HCT116 (cell line): ENCODE measurements at regions of chr10 and their contacts with region 1.

Region 1: GRCh38 chr10:11515596-11516430 is 95.6 kb downstream of the USP6NL start:
- DNase-seq: peak; percentile 54
- ATAC-seq: peak; percentile 91
- H3K4me3 ChIP-seq: no peak overlapping the region
- H3K27ac ChIP-seq: no peak overlapping the region
- H3K4me1 ChIP-seq: peaks cover 0 to 14% of the 10 kb centered on the region in 2 experiments; a peak in 1 of 4 replicates
- H3K27me3 ChIP-seq: no peaks in the 10 kb centered on the region
- CTCF ChIP-seq: peak; percentile 77 to 85 (median 81)
- POLR2A ChIP-seq: no peak
- RAD21 ChIP-seq: peak; percentile 92

Region 2: DNA sequence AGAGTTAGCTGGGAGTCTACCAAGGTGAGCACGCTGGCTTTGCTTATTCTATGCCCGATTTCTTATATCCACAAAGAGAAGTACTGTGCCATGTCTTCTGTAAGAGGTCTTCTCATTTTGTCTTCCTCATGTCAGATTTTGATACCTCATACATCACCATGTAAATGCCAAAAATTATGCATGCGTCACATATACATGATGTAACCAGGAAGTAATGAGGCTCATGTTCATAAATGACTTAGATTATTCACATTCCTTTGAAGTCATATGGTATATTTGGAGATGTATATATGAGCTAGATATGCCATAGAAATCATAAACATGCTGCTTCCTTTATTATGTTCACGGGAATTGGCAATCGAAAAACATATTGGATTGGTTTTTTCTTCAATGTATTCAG is 595.8 kb before region 1 on chr10:
- CTCF ChIA-PET with region 1: no interaction called
- POLR2A ChIA-PET with region 1: no interaction called
- RAD21 ChIA-PET with region 1: no interaction called
- intact Hi-C with region 1: no loop called
- DNase-seq: no peak
- ATAC-seq: no peak
- H3K4me3 ChIP-seq: no peak overlapping the region
- H3K27ac ChIP-seq: no peak overlapping the region
- H3K4me1 ChIP-seq: no peaks in the 10 kb centered on the region
- H3K27me3 ChIP-seq: no peaks in the 10 kb centered on the region
- CTCF ChIP-seq: no peak
- POLR2A ChIP-seq: no peak
- RAD21 ChIP-seq: no peak

Region 3: DNA sequence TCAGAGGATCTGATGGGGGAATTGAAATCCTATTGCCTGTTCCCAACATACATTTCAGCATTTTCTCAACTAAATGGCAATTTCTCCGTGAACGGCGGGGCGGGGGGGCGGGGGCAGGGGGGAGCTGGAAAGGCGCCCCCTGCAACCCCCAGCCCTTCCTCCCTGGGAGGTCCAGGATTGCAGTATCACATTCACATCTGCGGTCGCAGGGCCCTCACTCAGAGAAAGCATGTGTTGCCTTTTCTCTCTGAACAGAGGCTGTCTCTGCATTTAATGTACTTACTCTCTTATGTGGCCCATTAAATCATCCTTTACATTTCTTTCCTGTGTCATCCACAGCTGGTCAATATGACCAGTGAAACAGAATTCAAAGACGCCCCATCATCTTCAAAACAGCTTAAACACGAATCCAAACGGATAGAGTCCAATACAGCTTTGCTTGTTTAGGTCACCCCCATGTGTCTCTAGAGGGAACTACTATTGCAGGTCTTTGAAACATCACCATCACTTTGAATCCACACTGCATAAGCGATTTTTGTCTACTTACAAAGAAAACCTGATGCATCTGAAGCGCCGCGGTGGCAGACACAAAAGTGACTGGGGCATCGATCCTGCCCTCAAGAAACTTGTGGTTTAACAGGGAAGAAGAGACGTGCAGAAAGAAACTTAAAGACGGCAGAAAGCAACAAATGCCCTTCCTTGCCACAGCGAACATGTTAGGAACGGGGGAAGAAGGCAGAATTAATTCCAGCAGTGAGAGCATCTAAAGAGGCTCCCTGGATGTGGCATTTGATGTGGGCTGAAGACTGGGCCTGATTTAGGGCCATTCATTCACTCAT is 209.3 kb after region 1 on chr10:
- CTCF ChIA-PET with region 1: interaction called, 39 read pairs
- POLR2A ChIA-PET with region 1: no interaction called
- RAD21 ChIA-PET with region 1: interaction called, 4 to 5 read pairs
- intact Hi-C with region 1: loop called (anchors 1 kb)
- DNase-seq: peak; percentile 56
- ATAC-seq: peak; percentile 97
- H3K4me3 ChIP-seq: no peak overlapping the region
- H3K27ac ChIP-seq: no peak overlapping the region
- H3K4me1 ChIP-seq: no peaks in the 10 kb centered on the region
- H3K27me3 ChIP-seq: no peaks in the 10 kb centered on the region
- CTCF ChIP-seq: peak; percentile 77 to 84 (median 80)
- POLR2A ChIP-seq: no peak
- RAD21 ChIP-seq: peak; percentile 95